Panc1 (cell line): ENCODE measurements at regions of chr10 and their contacts with region 1.

Region 1: GRCh38 chr10:11853468-11853867 is 30.3 kb downstream of the PROSER2 start:
- DNase-seq: no peak
- ATAC-seq: no peak
- H3K4me3 ChIP-seq: no peak overlapping the region
- H3K27ac ChIP-seq: no peak overlapping the region
- H3K4me1 ChIP-seq: no peaks in the 10 kb centered on the region
- H3K27me3 ChIP-seq: no peaks in the 10 kb centered on the region
- CTCF ChIP-seq: no peak; the same call in 1 of the 2 replicates

Region 2: GRCh38 chr10:11798845-11799735 is 54.4 kb before region 1 on chr10:
- CTCF ChIA-PET with region 1: interaction called, 13 read pairs
- POLR2A ChIA-PET with region 1: no interaction called
- in situ Hi-C with region 1: no loop called
- intact Hi-C with region 1: no loop called
- DNase-seq: no peak
- ATAC-seq: no peak
- H3K4me3 ChIP-seq: no peak overlapping the region
- H3K27ac ChIP-seq: no peak overlapping the region
- H3K4me1 ChIP-seq: no peaks in the 10 kb centered on the region
- H3K27me3 ChIP-seq: no peaks in the 10 kb centered on the region
- CTCF ChIP-seq: no peak

Region 3: DNA sequence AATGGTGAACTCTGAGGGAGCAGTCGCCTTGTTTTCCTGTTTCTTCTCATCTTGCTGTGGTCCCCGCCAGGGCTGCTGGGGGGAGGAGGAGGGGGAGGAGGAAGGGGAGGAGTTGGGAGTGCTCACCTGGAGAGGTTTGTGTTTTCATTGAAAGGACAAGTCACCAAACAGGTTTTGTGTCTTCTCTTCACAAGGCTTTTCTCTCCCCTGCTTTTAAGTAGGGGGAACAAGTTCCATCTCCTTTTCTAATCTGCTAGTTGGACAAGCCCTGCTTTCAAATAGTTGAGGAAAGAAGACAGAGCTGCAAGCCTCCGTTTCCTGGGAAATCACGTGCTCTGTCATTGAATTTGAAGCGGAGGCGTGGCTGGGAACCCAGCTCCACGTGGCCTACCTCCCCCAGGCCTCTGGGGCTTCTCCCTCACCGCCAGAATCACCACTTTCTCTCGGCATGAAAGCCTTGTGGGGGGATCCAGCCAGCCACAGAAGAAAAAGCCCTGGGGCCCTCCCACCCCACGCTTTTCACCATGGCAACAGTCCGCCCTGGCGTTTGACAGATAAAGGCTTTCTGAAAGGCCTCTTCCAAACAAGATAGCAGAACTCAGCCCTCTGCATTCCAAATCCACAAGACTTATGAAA is 21.2 kb after region 1 on chr10:
- CTCF ChIA-PET with region 1: no interaction called
- POLR2A ChIA-PET with region 1: no interaction called
- in situ Hi-C with region 1: no loop called
- intact Hi-C with region 1: no loop called
- DNase-seq: no peak
- ATAC-seq: no peak
- H3K4me3 ChIP-seq: no peak overlapping the region
- H3K27ac ChIP-seq: no peak overlapping the region
- H3K4me1 ChIP-seq: peaks cover 5% of the 10 kb centered on the region
- H3K27me3 ChIP-seq: no peaks in the 10 kb centered on the region
- CTCF ChIP-seq: no peak